ENCODE measurements at regions of chr9 and their contacts with region 1.

Region 1: DNA sequence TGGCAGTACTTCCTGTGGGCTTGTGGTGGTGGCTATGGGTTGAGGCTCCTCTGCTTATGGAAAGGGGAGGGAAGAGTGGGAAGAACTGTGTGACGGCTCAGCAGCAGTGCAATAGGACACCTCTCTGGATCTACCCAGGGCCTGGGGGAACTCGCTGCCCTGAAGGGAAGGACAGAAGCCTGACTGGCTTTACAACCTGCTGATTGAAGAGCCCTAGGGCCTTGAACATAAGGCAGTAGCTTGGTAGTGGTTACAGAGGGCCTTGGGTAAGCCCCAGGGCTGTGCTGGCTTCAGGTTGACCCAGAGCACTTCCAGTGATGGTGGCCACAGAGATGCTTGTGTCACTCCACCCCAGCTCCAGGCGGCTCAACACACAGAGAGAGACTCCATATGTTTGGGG is 5.5 kb downstream of the CCIN start:
- DNase-seq: no peak
- ATAC-seq: no peak; the same call in 2 of the 3 replicates
- H3K4me3 ChIP-seq: no peak overlapping the region
- H3K27ac ChIP-seq: no peak overlapping the region
- H3K4me1 ChIP-seq: no peaks in the 10 kb centered on the region; a peak in 1 of 5 replicates
- H3K27me3 ChIP-seq: peaks cover 0 to 15% of the 10 kb centered on the region in 2 experiments; a peak in 2 of 5 replicates
- CTCF ChIP-seq: no peak
- EP300 ChIP-seq: no peak
- POLR2A ChIP-seq: no peak
- RAD21 ChIP-seq: no peak

Region 2: DNA sequence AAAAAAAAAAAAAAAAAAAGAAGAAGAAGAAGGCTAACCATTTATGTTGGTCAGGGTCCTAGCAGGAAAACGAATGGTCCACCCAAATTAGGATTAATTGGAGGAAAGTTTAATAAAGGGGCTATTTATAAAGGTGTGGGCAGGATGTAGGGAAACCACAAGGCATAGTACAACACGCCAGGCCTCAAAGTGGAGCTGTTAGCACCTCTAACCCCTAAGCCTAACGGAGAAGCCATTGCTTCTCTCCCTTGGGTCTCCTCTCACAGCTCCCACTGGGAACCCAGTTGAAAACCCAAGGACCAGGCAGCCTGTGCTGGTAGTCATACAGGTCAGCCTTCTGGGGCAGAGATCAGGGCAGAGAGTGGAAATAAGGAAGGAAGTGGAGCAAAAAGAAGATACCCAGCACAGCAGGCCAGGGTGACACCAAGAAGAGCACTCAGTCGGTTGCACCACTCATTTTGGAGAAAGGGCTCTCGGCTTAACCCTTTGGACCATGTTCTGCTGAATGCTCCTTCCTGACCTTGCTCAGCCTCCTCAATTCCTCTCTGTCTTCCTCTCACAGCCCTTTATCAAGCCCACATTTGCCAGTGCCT is 47.0 kb before region 1 on chr9:
- CTCF ChIA-PET with region 1: no interaction called
- POLR2A ChIA-PET with region 1: no interaction called
- in situ Hi-C with region 1: no loop called
- intact Hi-C with region 1: no loop called
- DNase-seq: no peak
- ATAC-seq: no peak
- H3K4me3 ChIP-seq: no peak overlapping the region
- H3K27ac ChIP-seq: no peak overlapping the region
- H3K4me1 ChIP-seq: no peaks in the 10 kb centered on the region; a peak in 2 of 5 replicates
- H3K27me3 ChIP-seq: no peaks in the 10 kb centered on the region
- CTCF ChIP-seq: no peak
- EP300 ChIP-seq: no peak
- POLR2A ChIP-seq: no peak
- RAD21 ChIP-seq: no peak

Region 3: DNA sequence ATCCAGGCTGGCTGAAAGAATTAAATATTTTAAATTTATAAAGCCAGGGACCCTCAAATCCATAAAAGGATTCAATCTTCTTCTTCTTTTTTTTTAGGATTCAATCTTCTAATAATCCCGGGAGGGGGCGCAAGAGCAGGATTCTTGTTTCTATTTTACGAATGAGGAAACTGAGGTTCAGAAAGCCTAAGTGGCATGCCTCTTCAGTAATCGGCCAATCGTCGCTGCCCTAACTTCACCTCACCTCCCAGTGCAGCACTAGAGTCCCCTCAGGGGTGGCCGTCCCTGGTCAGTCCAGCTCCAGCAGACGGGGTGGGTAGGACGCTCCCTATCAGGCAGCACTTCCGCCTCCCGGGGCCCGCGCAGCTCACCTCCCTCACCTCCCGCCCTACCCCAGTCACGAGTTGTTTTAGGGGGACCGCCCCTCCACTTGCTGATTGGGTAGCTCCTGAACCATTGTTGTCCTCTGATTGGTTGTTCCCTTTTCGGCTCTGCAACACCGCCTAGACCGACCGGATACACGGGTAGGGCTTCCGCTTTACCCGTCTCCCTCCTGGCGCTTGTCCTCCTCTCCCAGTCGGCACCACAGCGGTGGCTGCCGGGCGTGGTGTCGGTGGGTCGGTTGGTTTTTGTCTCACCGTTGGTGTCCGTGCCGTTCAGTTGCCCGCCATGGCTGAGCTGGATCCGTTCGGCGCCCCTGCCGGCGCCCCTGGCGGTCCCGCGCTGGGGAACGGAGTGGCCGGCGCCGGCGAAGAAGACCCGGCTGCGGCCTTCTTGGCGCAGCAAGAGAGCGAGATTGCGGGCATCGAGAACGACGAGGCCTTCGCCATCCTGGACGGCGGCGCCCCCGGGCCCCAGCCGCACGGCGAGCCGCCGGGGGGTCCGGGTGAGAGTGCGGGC is 15.9 kb after region 1 on chr9 and contains the start of gene CLTA:
- CTCF ChIA-PET with region 1: no interaction called
- POLR2A ChIA-PET with region 1: interaction called, 13 read pairs
- in situ Hi-C with region 1: no loop called
- intact Hi-C with region 1: no loop called
- DNase-seq: peak; percentile 93 to 97 (median 96)
- ATAC-seq: peak; percentile 99
- H3K4me3 ChIP-seq: peak within 1 kb of the TSS; percentile 97
- H3K27ac ChIP-seq: peak within 1 kb of the TSS; percentile 93
- H3K4me1 ChIP-seq: peaks cover 3 to 12% of the 10 kb centered on the region in 2 experiments; a peak in 4 of 5 replicates
- H3K27me3 ChIP-seq: no peaks in the 10 kb centered on the region
- CTCF ChIP-seq: peak; percentile 31 to 50 (median 49)
- EP300 ChIP-seq: no peak
- POLR2A ChIP-seq: peak; percentile 97
- RAD21 ChIP-seq: 0 out of 4 replicates have a peak, but pooled peaks of 1 of the 2 experiments have one; percentile 12
- polyA plus RNA-seq, gene CLTA: 37.8 to 39.6 TPM

Region 4: DNA sequence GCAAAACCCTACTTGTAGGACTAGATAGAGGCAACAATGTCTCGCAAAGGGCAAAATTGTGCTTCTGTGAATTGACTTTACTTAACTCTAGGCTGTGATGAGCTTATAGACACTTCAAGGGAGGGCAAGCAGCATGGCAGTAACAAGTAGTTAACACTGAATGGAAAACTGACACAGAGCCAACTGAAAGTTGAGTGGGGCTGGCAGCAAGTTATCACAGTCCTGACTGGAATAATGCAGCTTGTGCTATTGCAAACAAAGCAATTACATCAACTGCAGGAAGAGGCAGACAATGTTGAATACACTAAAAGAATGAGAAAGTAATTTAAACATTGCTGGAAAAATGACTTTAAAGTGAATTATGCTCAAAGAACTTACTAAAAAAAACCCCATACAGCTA is 163.1 kb after region 1 on chr9:
- CTCF ChIA-PET with region 1: no interaction called
- POLR2A ChIA-PET with region 1: no interaction called
- in situ Hi-C with region 1: no loop called
- intact Hi-C with region 1: no loop called
- DNase-seq: no peak
- ATAC-seq: no peak
- H3K4me3 ChIP-seq: no peak overlapping the region
- H3K27ac ChIP-seq: no peak overlapping the region
- H3K4me1 ChIP-seq: no peaks in the 10 kb centered on the region
- H3K27me3 ChIP-seq: no peaks in the 10 kb centered on the region
- CTCF ChIP-seq: no peak
- EP300 ChIP-seq: no peak
- POLR2A ChIP-seq: no peak
- RAD21 ChIP-seq: no peak